ENCODE measurements at regions of chr6 and their contacts with region 1.

Region 1: GRCh38 chr6:136761227-136761922 is 30.9 kb downstream of the MAP3K5 start:
- DNase-seq: no peak
- ATAC-seq: peak; percentile 25
- H3K4me3 ChIP-seq: peak overlapping the region; percentile 61
- H3K27ac ChIP-seq: peak overlapping the region; percentile 97
- H3K4me1 ChIP-seq: peaks cover 61% of the 10 kb centered on the region
- H3K27me3 ChIP-seq: no peaks in the 10 kb centered on the region
- CTCF ChIP-seq: no peak
- EP300 ChIP-seq: 0 out of 4 replicates have a peak, but pooled peaks of 1 of the 2 experiments have one; percentile 33
- POLR2A ChIP-seq: 0 out of 2 replicates have a peak, but pooled peaks have one; percentile 32
- RAD21 ChIP-seq: no peak

Region 2: DNA sequence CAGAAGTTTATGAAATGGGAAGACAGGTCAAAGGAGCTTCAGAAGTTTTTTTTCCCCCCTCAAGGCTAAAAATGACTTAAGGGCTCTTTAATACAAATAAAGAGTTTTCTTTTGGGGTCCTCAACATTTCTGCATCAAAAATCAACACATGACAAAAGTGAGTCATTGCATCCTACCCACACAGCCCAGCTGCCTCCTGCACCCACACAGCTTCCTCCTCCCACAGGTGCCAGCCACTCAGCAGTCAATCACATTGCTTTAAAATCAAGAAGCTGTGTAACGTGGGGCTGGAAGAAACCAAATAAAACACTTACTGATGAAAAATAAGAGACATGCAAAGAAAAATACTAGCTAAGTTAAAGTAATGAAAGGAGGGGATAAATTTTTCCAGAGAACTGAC is 37.6 kb before region 1 on chr6:
- CTCF ChIA-PET with region 1: interaction called, 63 read pairs
- POLR2A ChIA-PET with region 1: interaction called, 163 read pairs
- RAD21 ChIA-PET with region 1: interaction called, 246 read pairs
- SMC1A ChIA-PET with region 1: interaction called, 268 read pairs
- in situ Hi-C with region 1: no loop called
- intact Hi-C with region 1: loop called (anchors 1 kb)
- DNase-seq: peak; percentile 53
- ATAC-seq: peak; percentile 64
- H3K4me3 ChIP-seq: no peak overlapping the region
- H3K27ac ChIP-seq: peak overlapping the region; percentile 30
- H3K4me1 ChIP-seq: peaks cover 20% of the 10 kb centered on the region
- H3K27me3 ChIP-seq: no peaks in the 10 kb centered on the region
- CTCF ChIP-seq: no peak
- EP300 ChIP-seq: no peak
- POLR2A ChIP-seq: no peak
- RAD21 ChIP-seq: no peak

Region 3: GRCh38 chr6:136737871-136738691 is 23.3 kb before region 1 on chr6:
- CTCF ChIA-PET with region 1: interaction called, 9 read pairs
- POLR2A ChIA-PET with region 1: interaction called, 6 read pairs
- RAD21 ChIA-PET with region 1: interaction called, 16 read pairs
- SMC1A ChIA-PET with region 1: interaction called, 83 read pairs
- in situ Hi-C with region 1: no loop called
- intact Hi-C with region 1: no loop called
- DNase-seq: no peak
- ATAC-seq: no peak
- H3K4me3 ChIP-seq: no peak overlapping the region
- H3K27ac ChIP-seq: no peak overlapping the region
- H3K4me1 ChIP-seq: peaks cover 7% of the 10 kb centered on the region; the same call in 1 of the 2 replicates
- H3K27me3 ChIP-seq: no peaks in the 10 kb centered on the region
- CTCF ChIP-seq: no peak
- EP300 ChIP-seq: no peak
- POLR2A ChIP-seq: no peak
- RAD21 ChIP-seq: no peak

Region 4: DNA sequence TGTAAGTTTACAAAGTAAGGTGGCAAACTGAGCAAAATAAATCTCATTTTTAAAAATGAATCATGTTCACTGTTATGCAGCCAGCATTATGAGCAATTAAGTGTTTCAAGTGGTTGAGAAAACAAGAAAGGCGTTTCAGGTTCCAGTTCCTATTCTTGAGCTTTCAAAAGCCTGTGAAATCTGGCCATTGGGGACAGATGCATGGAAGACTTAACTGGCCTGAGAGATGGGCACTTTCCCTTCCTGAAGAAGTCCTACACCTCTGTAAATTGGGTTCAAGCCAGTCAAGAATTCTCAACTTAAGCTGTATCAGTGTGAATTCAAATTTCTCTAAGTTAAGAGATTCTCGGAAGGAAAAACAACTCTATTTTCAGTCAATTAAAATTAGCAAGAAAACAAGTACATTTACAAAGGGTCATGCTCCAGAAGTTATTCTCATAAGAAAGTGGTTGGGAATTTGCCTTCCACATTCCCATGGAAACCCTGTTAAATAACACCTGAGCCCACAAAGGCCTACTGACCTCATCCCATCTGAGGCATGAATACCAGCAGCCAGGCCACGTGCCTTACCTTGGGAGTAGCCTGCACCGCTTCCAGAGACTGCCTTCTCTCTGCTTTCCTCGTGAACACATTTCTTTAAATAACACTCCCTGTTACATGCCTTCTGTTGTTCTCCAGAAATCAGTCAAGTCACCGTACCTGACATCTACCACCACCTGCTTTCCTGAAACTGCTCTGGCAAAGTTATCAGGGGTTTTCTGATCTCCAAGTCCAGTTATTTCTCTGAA is 11.5 kb after region 1 on chr6:
- CTCF ChIA-PET with region 1: interaction called, 11 read pairs
- POLR2A ChIA-PET with region 1: interaction called, 98 read pairs
- RAD21 ChIA-PET with region 1: interaction called, 116 read pairs
- SMC1A ChIA-PET with region 1: interaction called, 135 read pairs
- in situ Hi-C with region 1: no loop called
- intact Hi-C with region 1: no loop called
- DNase-seq: peak; percentile 93
- ATAC-seq: peak; percentile 75
- H3K4me3 ChIP-seq: peak overlapping the region; percentile 49
- H3K27ac ChIP-seq: peak overlapping the region; percentile 92
- H3K4me1 ChIP-seq: peaks cover 57% of the 10 kb centered on the region
- H3K27me3 ChIP-seq: no peaks in the 10 kb centered on the region
- CTCF ChIP-seq: no peak
- EP300 ChIP-seq: peak; percentile 50 to 93; a peak in 3 of 4 replicates
- POLR2A ChIP-seq: peak; percentile 38; the same call in 1 of the 2 replicates
- RAD21 ChIP-seq: no peak; the same call in 1 of the 2 replicates

Region 5: GRCh38 chr6:136816656-136817055 is 55.3 kb after region 1 on chr6:
- CTCF ChIA-PET with region 1: no interaction called
- POLR2A ChIA-PET with region 1: no interaction called
- RAD21 ChIA-PET with region 1: no interaction called
- SMC1A ChIA-PET with region 1: no interaction called
- in situ Hi-C with region 1: no loop called
- intact Hi-C with region 1: no loop called
- DNase-seq: no peak
- ATAC-seq: no peak
- H3K4me3 ChIP-seq: no peak overlapping the region
- H3K27ac ChIP-seq: no peak overlapping the region
- H3K4me1 ChIP-seq: no peaks in the 10 kb centered on the region
- H3K27me3 ChIP-seq: no peaks in the 10 kb centered on the region
- CTCF ChIP-seq: no peak
- EP300 ChIP-seq: no peak
- POLR2A ChIP-seq: no peak
- RAD21 ChIP-seq: no peak